GM23248 (cell line): ENCODE measurements at regions of chr7 and their contacts with region 1.

Region 1: DNA sequence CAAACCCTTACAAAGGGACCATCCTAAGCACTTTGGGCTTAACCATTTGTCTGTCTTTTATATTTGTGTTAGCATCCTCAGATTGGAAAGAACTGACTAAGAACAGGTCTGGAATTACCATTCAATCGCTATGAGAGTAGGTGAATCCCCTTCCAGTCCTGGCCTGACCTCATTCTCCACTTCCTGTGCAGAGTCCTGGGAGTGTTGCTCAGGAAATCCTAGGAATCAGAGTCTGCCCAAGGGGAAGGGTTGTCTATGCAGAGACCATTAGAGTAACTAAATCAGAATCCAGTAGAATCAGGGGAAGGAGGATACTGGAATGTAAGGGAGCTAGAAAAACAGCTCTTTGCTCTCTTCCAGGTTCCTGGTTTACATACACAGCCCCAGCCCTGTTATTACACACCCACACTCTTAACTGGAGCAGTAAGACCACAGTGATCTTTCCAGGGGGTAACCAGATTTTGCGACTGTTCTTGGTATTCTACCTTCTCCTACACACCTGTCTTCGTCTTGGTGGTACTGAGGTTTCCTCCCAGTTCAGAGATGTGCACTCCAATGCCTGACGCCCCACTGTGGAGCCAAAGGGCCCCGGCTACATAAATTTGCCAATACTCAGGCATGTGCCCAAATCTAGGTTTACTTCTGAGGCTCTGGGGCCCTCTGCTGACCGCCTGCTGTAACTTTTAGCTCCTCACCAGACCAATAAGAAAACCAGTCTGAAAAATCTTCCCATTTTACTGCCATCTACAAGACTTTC is 103.7 kb downstream of the RNF216 start:
- DNase-seq: peak; percentile 86
- H3K4me3 ChIP-seq: no peak overlapping the region
- H3K27ac ChIP-seq: peak overlapping the region; percentile 11
- H3K4me1 ChIP-seq: peaks cover 12% of the 10 kb centered on the region; the same call in 1 of the 2 replicates
- H3K27me3 ChIP-seq: no peaks in the 10 kb centered on the region

Region 2: GRCh38 chr7:5231811-5232484 is 445.8 kb before region 1 on chr7:
- in situ Hi-C with region 1: loop called (anchors 25 kb)
- DNase-seq: no peak
- H3K4me3 ChIP-seq: no peak overlapping the region
- H3K27ac ChIP-seq: no peak overlapping the region
- H3K4me1 ChIP-seq: no peaks in the 10 kb centered on the region
- H3K27me3 ChIP-seq: no peaks in the 10 kb centered on the region

Region 3: DNA sequence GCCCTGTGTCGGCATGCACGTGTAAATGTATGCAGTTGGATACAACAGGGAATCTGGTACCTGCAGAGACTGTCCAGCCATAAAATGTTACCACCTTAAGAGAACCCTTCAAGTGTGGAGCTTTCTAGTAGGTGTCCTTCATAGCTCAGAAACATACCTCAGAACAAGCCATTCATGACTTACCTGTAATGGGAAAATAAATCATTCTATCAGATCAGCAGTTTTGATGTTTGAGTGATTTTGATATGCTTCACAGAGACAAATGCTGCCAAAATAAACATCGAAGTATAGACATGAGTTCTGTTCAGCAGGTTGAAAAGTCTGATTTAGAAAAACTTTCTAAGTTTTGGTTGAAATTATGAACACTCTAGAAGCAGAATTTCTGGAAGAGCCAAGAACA is 1929.3 kb after region 1 on chr7:
- in situ Hi-C with region 1: no loop called
- DNase-seq: no peak
- H3K4me3 ChIP-seq: no peak overlapping the region
- H3K27ac ChIP-seq: no peak overlapping the region
- H3K4me1 ChIP-seq: no peaks in the 10 kb centered on the region
- H3K27me3 ChIP-seq: no peaks in the 10 kb centered on the region